Psoas muscle (tissue), 8 donors: ENCODE measurements at regions of chr2 and their contacts with region 1.

Region 1: GRCh38 chr2:101308432-101309210 is at the start of gene RNF149:
- DNase-seq: peak; percentile 94 to 96
- ATAC-seq: peak; percentile 93 to 95 (median 94)
- H3K4me3 ChIP-seq: peak within 1 kb of the TSS; percentile 83
- H3K27ac ChIP-seq: peak within 1 kb of the TSS; percentile 93
- H3K4me1 ChIP-seq: peaks cover 20% of the 10 kb centered on the region
- H3K27me3 ChIP-seq: no peaks in the 10 kb centered on the region
- CTCF ChIP-seq: no peak
- total RNA-seq, gene RNF149: 13.5 to 23.7 (median 20.0) TPM

Region 2: DNA sequence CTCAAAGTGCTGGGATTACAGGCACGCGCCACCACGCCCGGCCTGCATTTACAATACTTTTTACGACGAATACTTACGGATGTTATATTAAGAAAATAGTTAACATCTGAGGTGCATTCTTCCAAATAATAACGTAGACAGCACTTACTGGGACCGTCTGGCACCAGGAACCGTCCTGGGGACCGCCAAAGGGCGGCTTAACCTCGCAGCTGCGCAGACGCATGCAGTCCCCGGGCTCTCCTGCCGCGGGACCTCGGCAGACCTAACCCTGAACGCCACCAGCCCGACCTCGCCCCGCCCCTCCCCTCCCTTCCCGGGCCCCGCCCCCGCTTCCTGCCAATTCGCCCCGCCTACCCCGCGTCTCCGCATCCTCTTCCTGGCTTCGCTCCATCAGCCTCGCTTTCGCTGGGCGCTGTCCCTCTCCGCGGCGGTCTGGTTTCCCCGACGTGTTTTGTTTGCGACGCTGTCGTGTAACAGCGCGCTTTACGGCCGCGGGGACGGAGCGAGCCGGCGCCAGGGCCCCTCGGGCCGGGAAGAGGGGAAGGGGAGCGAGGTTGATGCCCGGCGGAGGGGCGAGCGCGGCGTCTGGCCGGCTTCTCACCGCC is 56.1 kb before region 1 on chr2 and contains the start of gene CNOT11:
- intact Hi-C with region 1: loop called (anchors 2 to 5 kb)
- DNase-seq: peak; percentile 100
- ATAC-seq: peak; percentile 94 to 95 (median 94)
- H3K4me3 ChIP-seq: peak within 1 kb of the TSS; percentile 100
- H3K27ac ChIP-seq: peak within 1 kb of the TSS; percentile 99
- H3K4me1 ChIP-seq: peaks cover 24% of the 10 kb centered on the region
- H3K27me3 ChIP-seq: no peaks in the 10 kb centered on the region
- CTCF ChIP-seq: no peak
- total RNA-seq, gene CNOT11: 29.6 to 42.1 (median 34.8) TPM

Region 3: GRCh38 chr2:101349893-101350662 is 41.5 kb after region 1 on chr2:
- intact Hi-C with region 1: no loop called
- DNase-seq: no peak
- ATAC-seq: no peak
- H3K4me3 ChIP-seq: no peak overlapping the region
- H3K27ac ChIP-seq: no peak overlapping the region
- H3K4me1 ChIP-seq: no peaks in the 10 kb centered on the region
- H3K27me3 ChIP-seq: no peaks in the 10 kb centered on the region
- CTCF ChIP-seq: no peak